IMR-90 (cell line): ENCODE measurements at regions of chr13 and their contacts with region 1.

Region 1: DNA sequence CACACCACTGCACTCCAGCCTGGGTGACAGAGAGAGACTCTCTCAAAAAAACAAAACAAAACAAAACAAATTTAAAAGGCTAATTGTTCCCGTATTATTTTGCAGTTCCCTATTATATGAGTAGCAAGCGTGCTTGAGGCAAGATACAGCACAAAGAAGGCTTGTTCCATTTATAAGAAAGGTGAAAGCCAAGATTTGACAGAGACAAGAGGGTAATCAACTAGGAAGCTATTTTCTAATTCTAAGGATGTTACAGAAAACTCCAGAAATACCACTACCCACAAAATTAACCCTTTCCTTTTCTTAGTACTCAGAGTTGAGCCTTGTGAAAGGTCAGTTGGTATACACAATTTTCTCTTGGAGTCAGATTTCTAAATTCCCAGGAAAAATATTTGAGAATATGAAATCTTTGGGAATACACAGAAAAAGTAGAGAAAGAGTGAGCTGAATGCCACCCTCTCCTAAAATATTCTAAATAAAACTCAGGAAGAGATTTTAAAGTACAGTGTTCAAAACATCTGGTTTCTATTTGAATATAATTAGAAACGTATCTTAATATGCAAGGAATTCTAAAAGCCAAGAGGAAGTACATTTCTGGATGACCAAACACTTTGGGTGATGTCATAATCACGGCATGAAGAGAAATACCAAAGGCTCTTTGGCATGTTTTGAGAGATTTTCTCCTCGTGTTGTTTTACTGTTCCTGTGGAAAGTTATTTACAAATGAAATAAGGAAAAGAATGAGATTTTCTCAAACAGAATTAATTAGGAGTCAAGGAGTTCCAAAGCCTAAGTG is 63.0 kb upstream of the FLT1 start:
- DNase-seq: peak; percentile 97
- ATAC-seq: peak; percentile 86
- H3K4me3 ChIP-seq: no peak overlapping the region
- H3K27ac ChIP-seq: peak overlapping the region; percentile 94
- H3K4me1 ChIP-seq: peaks cover 17% of the 10 kb centered on the region
- H3K27me3 ChIP-seq: no peaks in the 10 kb centered on the region
- CTCF ChIP-seq: no peak
- POLR2A ChIP-seq: no peak
- RAD21 ChIP-seq: no peak

Region 2: DNA sequence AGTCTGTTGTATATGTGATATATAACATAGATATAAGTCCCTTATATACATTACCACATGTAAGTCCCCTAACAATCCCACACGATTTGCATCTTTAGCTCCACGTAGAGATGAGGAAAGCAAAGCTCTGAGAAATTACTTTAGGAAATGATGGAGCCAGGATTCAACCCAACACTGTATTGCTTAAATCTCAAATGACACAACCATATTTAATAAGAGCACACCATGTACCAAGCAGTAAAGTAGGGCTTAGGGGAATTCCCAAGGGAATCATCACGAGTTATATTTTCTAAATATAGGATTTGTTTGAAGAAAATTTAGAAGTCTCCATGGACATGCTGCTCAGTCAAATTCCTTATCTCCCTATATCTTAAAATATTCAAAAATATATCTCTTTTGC is 39.7 kb after region 1 on chr13:
- CTCF ChIA-PET with region 1: no interaction called
- POLR2A ChIA-PET with region 1: no interaction called
- dilution Hi-C with region 1: no loop called
- in situ Hi-C with region 1: no loop called
- intact Hi-C with region 1: loop called (anchors 1 kb)
- DNase-seq: peak; percentile 60
- ATAC-seq: no peak
- H3K4me3 ChIP-seq: no peak overlapping the region
- H3K27ac ChIP-seq: no peak overlapping the region
- H3K4me1 ChIP-seq: no peaks in the 10 kb centered on the region
- H3K27me3 ChIP-seq: no peaks in the 10 kb centered on the region
- CTCF ChIP-seq: no peak
- POLR2A ChIP-seq: no peak
- RAD21 ChIP-seq: no peak

Region 3: GRCh38 chr13:28650284-28650683 is 92.4 kb after region 1 on chr13:
- CTCF ChIA-PET with region 1: no interaction called
- POLR2A ChIA-PET with region 1: no interaction called
- dilution Hi-C with region 1: no loop called
- in situ Hi-C with region 1: no loop called
- intact Hi-C with region 1: loop called (anchors 5 kb)
- DNase-seq: peak; percentile 85
- ATAC-seq: peak; percentile 89
- H3K4me3 ChIP-seq: no peak overlapping the region
- H3K27ac ChIP-seq: no peak overlapping the region
- H3K4me1 ChIP-seq: peaks cover 10% of the 10 kb centered on the region
- H3K27me3 ChIP-seq: no peaks in the 10 kb centered on the region
- CTCF ChIP-seq: no peak
- POLR2A ChIP-seq: no peak
- RAD21 ChIP-seq: no peak